Esophagus muscularis mucosa (tissue), 4 donors: ENCODE measurements at regions of chr17 and their contacts with region 1.

Region 1: GRCh38 chr17:38735161-38735997 is 5.2 kb downstream of the CISD3 start:
- DNase-seq: no peak
- H3K4me3 ChIP-seq: no peak overlapping the region
- H3K27ac ChIP-seq: peak overlapping the region in 2 of 4 donors; percentile 8 to 10
- H3K4me1 ChIP-seq: peaks cover 47 to 58% (median 52%) of the 10 kb centered on the region in 4 donors
- H3K27me3 ChIP-seq: no peaks in the 10 kb centered on the region
- CTCF ChIP-seq: peak; percentile 94 to 97 (median 95)
- EP300 ChIP-seq: no peak
- POLR2A ChIP-seq: no peak

Region 2: DNA sequence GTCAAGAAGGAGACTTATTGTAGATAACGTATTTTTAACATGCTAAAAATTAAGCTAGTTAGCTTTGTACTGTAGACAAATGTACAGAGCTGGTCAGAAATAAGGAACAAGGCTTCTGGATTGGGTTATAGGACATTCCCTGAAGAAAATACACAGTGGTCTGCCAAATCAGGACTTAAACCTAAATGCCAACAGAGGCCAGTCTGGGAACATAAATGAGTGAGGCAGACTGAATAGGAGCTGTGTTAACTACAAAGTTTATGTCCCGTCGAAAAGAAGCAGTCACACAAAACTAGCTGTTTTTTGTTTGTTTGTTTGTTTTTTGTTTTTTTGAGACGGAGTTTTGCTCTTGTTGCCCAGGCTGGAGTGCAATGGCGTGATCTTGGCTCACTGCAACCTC is 1479.9 kb before region 1 on chr17:
- intact Hi-C with region 1: no loop called
- DNase-seq: no peak
- H3K4me3 ChIP-seq: no peak overlapping the region
- H3K27ac ChIP-seq: no peak overlapping the region
- H3K4me1 ChIP-seq: no peaks in the 10 kb centered on the region
- H3K27me3 ChIP-seq: no peaks in the 10 kb centered on the region
- CTCF ChIP-seq: no peak
- EP300 ChIP-seq: no peak
- POLR2A ChIP-seq: no peak

Region 3: GRCh38 chr17:38428112-38428642 is 307.2 kb before region 1 on chr17 and contains the start of gene ARHGAP23:
- intact Hi-C with region 1: no loop called
- DNase-seq: no peak
- H3K4me3 ChIP-seq: peak within 1 kb of the TSS; percentile 78 to 98 (median 84)
- H3K27ac ChIP-seq: peak within 1 kb of the TSS; percentile 91 to 95 (median 93)
- H3K4me1 ChIP-seq: peaks cover 75 to 98% (median 82%) of the 10 kb centered on the region in 4 donors
- H3K27me3 ChIP-seq: no peaks in the 10 kb centered on the region
- CTCF ChIP-seq: no peak
- EP300 ChIP-seq: no peak
- POLR2A ChIP-seq: peak; percentile 39
- total RNA-seq, gene ARHGAP23: 58.6 to 150 (median 104) TPM

Region 4: DNA sequence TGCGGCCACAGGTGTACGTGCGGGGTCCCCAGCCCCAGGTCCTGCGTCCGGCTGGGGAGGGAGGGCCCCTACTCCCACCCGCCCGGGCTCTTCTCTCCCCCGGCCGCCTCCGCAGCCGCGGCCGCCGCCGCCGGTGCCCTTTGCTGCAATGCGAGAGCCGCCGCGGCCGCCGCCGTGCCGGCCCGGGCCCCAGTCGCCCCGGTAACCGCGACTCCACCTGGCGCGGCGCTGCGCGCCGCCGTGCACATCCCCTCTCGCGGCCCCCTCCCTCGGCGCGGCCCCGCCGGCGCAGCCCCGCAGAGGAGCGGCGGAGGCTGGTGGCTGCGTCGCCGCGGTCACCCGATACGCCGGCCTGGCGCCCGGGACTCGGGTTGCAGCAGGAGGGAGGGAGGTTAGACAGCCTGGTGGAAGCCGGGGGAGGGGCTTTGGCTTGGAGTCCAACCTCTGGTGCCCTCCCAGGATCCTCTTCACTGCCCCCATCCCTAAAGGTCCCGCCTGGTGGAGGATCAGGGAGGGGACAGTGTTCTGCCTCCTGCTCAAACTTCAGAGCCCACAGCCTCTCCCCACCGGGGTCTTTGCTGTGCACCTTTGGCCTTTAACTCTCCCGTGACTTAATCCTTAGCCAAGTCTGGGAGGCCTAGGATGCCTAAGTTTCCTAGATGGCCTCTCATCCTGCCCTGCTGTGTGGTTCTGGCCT is 162.6 kb before region 1 on chr17:
- intact Hi-C with region 1: no loop called
- DNase-seq: no peak
- H3K4me3 ChIP-seq: peak overlapping the region; percentile 41 to 54 (median 44)
- H3K27ac ChIP-seq: no peak overlapping the region
- H3K4me1 ChIP-seq: peaks cover 0 to 23% (median 22%) of the 10 kb centered on the region in 4 donors
- H3K27me3 ChIP-seq: peaks cover 2 to 97% (median 29%) of the 10 kb centered on the region in 4 donors
- CTCF ChIP-seq: no peak
- EP300 ChIP-seq: no peak
- POLR2A ChIP-seq: no peak

Region 5: GRCh38 chr17:38676706-38677504 is 58.5 kb before region 1 on chr17:
- intact Hi-C with region 1: loop called (anchors 1 kb)
- DNase-seq: peak; percentile 96
- H3K4me3 ChIP-seq: no peak overlapping the region
- H3K27ac ChIP-seq: peak overlapping the region in 2 of 4 donors; percentile 23 to 25
- H3K4me1 ChIP-seq: peaks cover 30 to 42% (median 38%) of the 10 kb centered on the region in 4 donors
- H3K27me3 ChIP-seq: peaks cover 15 to 49% (median 31%) of the 10 kb centered on the region in 4 donors
- CTCF ChIP-seq: peak; percentile 97 to 100 (median 99)
- EP300 ChIP-seq: no peak
- POLR2A ChIP-seq: no peak